ENCODE measurements at regions of chr3 and their contacts with region 1.

Region 1: DNA sequence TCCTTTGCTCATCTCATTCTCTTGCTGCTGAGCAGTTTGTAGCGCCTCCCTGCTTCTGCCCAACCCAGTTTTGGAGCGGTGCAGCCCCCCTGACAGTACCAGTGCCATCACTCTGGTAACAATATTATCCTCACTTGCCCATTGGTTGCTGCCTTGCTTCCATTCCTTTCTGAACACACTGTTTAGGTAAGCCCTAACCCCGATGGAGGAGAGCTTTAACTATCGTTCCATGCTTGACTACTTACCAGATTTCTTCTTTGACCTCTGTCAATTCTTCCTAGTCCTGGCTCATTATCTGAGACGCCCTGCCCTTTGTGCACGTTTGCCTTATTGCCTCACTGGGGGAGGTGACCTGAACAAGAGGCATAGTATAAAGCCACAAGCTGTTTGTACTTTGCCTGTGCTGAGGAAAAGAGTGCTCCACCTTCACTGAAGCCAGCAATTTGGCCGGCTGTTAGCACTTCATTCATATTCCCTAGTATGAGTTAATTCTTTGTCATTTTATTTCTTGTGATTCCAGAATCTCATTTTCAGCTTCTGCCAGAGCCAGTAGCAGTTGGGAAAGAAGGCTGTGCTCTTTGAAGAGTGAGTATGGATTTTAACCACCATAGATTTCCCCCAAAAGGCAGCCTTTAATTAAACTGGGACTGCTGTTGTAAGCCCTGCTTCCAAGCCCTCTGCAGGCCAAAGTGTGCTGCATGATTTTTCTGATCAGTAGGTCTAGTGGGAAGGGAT is 11.9 kb downstream of the ABHD6 start:
- DNase-seq: no peak
- ATAC-seq: peak; percentile 69
- H3K4me3 ChIP-seq: no peak overlapping the region
- H3K27ac ChIP-seq: no peak overlapping the region
- H3K4me1 ChIP-seq: peaks cover 4% of the 10 kb centered on the region
- H3K27me3 ChIP-seq: no peaks in the 10 kb centered on the region
- CTCF ChIP-seq: peak; percentile 21; the same call in 1 of the 2 replicates
- POLR2A ChIP-seq: no peak
- RAD21 ChIP-seq: no peak

Region 2: GRCh38 chr3:56966104-56966503 is 1283.4 kb before region 1 on chr3:
- CTCF ChIA-PET with region 1: no interaction called
- POLR2A ChIA-PET with region 1: interaction called, 20 read pairs
- dilution Hi-C with region 1: no loop called
- in situ Hi-C with region 1: no loop called
- intact Hi-C with region 1: no loop called
- DNase-seq: no peak
- ATAC-seq: no peak
- H3K4me3 ChIP-seq: no peak overlapping the region
- H3K27ac ChIP-seq: no peak overlapping the region
- H3K4me1 ChIP-seq: no peaks in the 10 kb centered on the region
- H3K27me3 ChIP-seq: no peaks in the 10 kb centered on the region
- CTCF ChIP-seq: no peak
- POLR2A ChIP-seq: no peak
- RAD21 ChIP-seq: no peak

Region 3: DNA sequence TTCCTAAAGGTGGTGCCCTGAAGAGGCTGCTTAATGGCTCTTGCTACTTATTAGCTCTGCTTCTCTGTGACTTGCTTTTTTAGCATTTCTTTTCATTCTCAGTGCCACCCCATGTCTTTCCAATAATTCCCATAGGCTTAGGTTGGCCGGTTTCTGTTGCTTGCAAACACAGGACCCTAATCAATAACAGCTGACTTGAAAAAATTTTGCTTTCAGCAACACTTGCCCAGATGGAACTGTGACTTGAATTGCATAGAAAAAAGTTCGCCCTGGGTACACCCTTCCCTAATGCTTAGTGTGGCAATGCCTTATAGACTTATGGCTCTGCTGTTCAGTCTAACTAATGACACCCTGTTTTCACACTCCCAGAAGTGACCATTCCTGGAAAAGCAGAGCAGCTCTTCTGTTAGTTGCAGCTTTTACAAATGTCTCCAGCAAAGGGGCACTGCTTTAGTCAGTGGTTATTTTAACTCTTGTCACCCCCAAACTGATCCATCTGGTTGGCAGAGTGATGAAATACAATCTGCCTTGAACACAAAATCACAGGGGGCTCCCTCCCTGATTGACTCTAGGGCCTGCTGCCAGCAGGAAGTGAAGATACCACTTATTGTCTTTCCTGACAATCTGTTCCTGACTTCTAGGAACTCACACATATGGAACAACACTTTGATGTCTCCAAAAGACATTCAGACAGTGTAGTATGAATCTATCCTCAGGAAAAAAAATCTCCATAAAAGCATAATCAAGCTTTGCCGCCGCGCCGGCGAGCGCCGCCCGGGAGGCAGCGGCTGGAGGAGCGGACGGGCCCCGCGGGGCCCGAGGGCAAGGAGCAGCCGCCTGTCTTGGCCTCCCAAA is 503.1 kb before region 1 on chr3:
- CTCF ChIA-PET with region 1: no interaction called
- POLR2A ChIA-PET with region 1: no interaction called
- dilution Hi-C with region 1: no loop called
- in situ Hi-C with region 1: no loop called
- intact Hi-C with region 1: no loop called
- DNase-seq: no peak
- ATAC-seq: no peak
- H3K4me3 ChIP-seq: no peak overlapping the region
- H3K27ac ChIP-seq: no peak overlapping the region
- H3K4me1 ChIP-seq: no peaks in the 10 kb centered on the region
- H3K27me3 ChIP-seq: no peaks in the 10 kb centered on the region
- CTCF ChIP-seq: no peak
- POLR2A ChIP-seq: no peak
- RAD21 ChIP-seq: no peak

Region 4: DNA sequence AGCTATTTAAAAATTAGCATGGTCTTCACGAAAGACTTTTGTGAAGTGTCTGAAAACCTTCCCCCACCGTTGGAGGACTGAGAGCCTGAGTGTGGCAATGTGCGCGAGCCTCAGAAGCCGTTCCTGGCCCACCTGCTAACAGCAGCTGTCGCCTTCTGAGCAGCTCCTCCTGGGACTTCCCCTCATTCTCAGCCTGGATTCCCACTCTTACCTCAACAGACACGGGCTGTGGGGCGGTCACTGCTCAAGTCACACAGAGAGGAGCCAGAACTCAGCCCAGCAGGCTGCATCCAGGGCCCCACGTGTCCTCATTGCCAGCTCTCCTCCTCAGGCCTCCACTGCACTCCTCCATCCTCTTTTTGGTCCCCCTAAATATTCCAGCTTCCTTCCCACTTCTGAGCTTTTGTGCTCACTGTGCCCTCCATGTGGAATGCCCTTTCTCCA is 46.6 kb before region 1 on chr3:
- CTCF ChIA-PET with region 1: no interaction called
- POLR2A ChIA-PET with region 1: no interaction called
- dilution Hi-C with region 1: no loop called
- in situ Hi-C with region 1: no loop called
- intact Hi-C with region 1: no loop called
- DNase-seq: no peak
- ATAC-seq: no peak
- H3K4me3 ChIP-seq: no peak overlapping the region
- H3K27ac ChIP-seq: no peak overlapping the region
- H3K4me1 ChIP-seq: peaks cover 3% of the 10 kb centered on the region
- H3K27me3 ChIP-seq: peaks cover 15% of the 10 kb centered on the region
- CTCF ChIP-seq: no peak
- POLR2A ChIP-seq: no peak
- RAD21 ChIP-seq: no peak

Region 5: DNA sequence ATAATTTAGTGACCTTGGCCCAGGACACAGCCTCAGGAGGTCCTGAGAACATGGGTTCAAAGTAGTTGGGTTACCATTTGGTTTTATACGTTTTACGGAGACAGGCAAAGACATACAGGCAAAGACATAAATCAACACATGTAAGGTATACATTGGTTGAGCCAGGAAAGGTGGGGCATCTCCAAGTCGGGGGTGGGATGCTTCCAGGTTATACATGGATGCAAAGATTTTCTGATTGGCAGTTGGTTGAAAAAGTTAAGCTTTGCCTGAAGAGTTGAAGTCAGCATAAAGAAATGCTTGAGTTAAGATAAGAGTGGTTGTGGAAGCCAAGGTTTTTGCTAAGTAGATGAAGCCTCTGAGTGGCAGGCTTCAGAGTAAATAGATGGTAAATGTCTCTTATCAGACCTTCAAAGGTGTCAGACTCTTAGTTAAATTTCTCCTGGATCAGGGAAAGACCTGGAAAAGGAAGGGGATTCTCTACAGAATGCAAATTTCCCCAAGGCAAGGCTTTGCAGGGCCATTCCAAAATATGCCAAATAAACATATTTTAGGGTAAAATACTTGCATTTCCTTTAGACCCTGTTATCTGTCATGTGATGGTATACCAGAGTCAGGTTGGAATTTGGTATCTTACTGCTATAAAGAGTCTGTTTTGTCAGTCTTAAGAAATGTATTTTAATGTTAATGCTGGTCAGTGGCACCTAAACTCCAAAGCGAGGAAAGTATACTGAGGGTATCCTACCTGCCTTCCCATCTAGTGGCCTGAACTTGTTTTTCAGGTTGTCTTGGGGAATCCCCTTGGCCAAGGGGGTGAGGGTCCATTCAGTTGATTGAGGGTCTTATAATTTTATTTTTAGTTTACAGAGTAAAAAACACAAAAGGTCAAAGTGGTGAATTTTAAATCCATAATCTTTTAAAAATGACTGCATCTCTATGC is 192.3 kb after region 1 on chr3:
- CTCF ChIA-PET with region 1: no interaction called
- POLR2A ChIA-PET with region 1: no interaction called
- dilution Hi-C with region 1: no loop called
- in situ Hi-C with region 1: no loop called
- intact Hi-C with region 1: no loop called
- DNase-seq: no peak
- ATAC-seq: no peak
- H3K4me3 ChIP-seq: no peak overlapping the region
- H3K27ac ChIP-seq: no peak overlapping the region
- H3K4me1 ChIP-seq: peaks cover 2% of the 10 kb centered on the region
- H3K27me3 ChIP-seq: no peaks in the 10 kb centered on the region
- CTCF ChIP-seq: no peak
- POLR2A ChIP-seq: no peak
- RAD21 ChIP-seq: no peak